Heart right ventricle (tissue), 16 donors: ENCODE measurements at regions of chr16 and their contacts with region 1.

Region 1: GRCh38 chr16:75110637-75111513 is 5.7 kb downstream of the LDHD start:
- DNase-seq: peak; percentile 88 to 91
- ATAC-seq: peak; percentile 45 to 83 (median 62)
- H3K4me3 ChIP-seq: peak overlapping the region in 8 of 10 donors; percentile 6 to 39 (median 26)
- H3K27ac ChIP-seq: peak overlapping the region; percentile 57 to 96 (median 86)
- H3K4me1 ChIP-seq: peaks cover 17 to 94% (median 81%) of the 10 kb centered on the region in 9 donors
- H3K27me3 ChIP-seq: peaks cover 0 to 15% (median 0%) of the 10 kb centered on the region in 7 donors
- CTCF ChIP-seq: peak; percentile 87 to 97 (median 93)

Region 2: GRCh38 chr16:74709441-74709877 is 401.4 kb before region 1 on chr16:
- intact Hi-C with region 1: loop called in 1 of 10 experiments (anchors 10 kb)
- DNase-seq: peak; percentile 72 to 80
- ATAC-seq: peak; percentile 74 to 93 (median 88)
- H3K4me3 ChIP-seq: no peak overlapping the region
- H3K27ac ChIP-seq: no peak overlapping the region
- H3K4me1 ChIP-seq: no peaks in the 10 kb centered on the region
- H3K27me3 ChIP-seq: no peaks in the 10 kb centered on the region
- CTCF ChIP-seq: peak; percentile 87 to 100 (median 95)

Region 3: GRCh38 chr16:74862741-74863244 is 248.1 kb before region 1 on chr16:
- intact Hi-C with region 1: loop called in 1 of 10 experiments (anchors 10 kb)
- DNase-seq: no peak
- ATAC-seq: peak in 2 of 8 donors; percentile 56 to 57
- H3K4me3 ChIP-seq: no peak overlapping the region
- H3K27ac ChIP-seq: no peak overlapping the region
- H3K4me1 ChIP-seq: peaks cover 0 to 8% (median 1%) of the 10 kb centered on the region in 9 donors
- H3K27me3 ChIP-seq: no peaks in the 10 kb centered on the region
- CTCF ChIP-seq: peak; percentile 65 to 93 (median 81)

Region 4: GRCh38 chr16:74909366-74910064 is 201.4 kb before region 1 on chr16:
- intact Hi-C with region 1: loop called in 1 of 10 experiments (anchors 10 kb)
- DNase-seq: peak in 1 of 2 donors; percentile 26
- ATAC-seq: peak in 1 of 8 donors; percentile 55
- H3K4me3 ChIP-seq: no peak overlapping the region
- H3K27ac ChIP-seq: no peak overlapping the region
- H3K4me1 ChIP-seq: no peaks in the 10 kb centered on the region
- H3K27me3 ChIP-seq: no peaks in the 10 kb centered on the region
- CTCF ChIP-seq: no peak

Region 5: GRCh38 chr16:75043175-75043895 is 67.5 kb before region 1 on chr16:
- intact Hi-C with region 1: loop called in 1 of 10 experiments (anchors 5 kb)
- DNase-seq: no peak
- ATAC-seq: peak in 1 of 8 donors; percentile 18
- H3K4me3 ChIP-seq: no peak overlapping the region
- H3K27ac ChIP-seq: peak overlapping the region in 9 of 10 donors; percentile 1 to 84 (median 71)
- H3K4me1 ChIP-seq: peaks cover 22 to 70% (median 58%) of the 10 kb centered on the region in 9 donors
- H3K27me3 ChIP-seq: no peaks in the 10 kb centered on the region
- CTCF ChIP-seq: no peak

Region 6: GRCh38 chr16:75064403-75065148 is 46.3 kb before region 1 on chr16:
- intact Hi-C with region 1: loop called in 4 of 10 experiments (anchors 5 to 10 kb)
- DNase-seq: no peak
- ATAC-seq: no peak
- H3K4me3 ChIP-seq: no peak overlapping the region
- H3K27ac ChIP-seq: peak overlapping the region in 1 of 10 donors; percentile 15
- H3K4me1 ChIP-seq: peaks cover 8 to 68% (median 41%) of the 10 kb centered on the region in 9 donors
- H3K27me3 ChIP-seq: no peaks in the 10 kb centered on the region
- CTCF ChIP-seq: no peak